ENCODE measurements at regions of chrX and their contacts with region 1.

Region 1: DNA sequence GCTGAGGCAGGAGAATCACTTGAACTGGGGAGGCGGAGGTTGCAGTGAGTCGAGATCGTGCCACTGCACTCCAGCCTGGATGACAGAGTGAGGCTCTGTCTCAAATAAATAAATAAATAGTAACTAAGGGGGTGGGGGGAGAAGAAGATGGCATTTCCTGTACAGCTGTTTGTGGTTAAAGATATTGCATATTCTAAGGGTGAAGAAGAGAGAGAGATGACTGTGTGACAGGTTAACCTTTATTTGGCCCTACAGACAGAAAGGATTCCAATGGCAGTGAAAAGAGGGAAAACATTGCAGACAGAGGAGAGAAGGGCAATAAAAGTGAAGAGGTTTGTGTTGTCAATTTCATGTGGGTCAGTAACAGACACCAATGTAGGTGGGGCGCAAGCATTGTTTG is 9.4 kb downstream of the TASL start:
- DNase-seq: no peak
- H3K4me3 ChIP-seq: no peak overlapping the region
- H3K27ac ChIP-seq: no peak overlapping the region
- H3K4me1 ChIP-seq: no peaks in the 10 kb centered on the region
- H3K27me3 ChIP-seq: no peaks in the 10 kb centered on the region
- CTCF ChIP-seq: no peak

Region 2: GRCh38 chrX:30713061-30713525 is 145.0 kb after region 1 on chrX:
- intact Hi-C with region 1: loop called (anchors 5 kb)
- DNase-seq: peak; percentile 55
- H3K4me3 ChIP-seq: no peak overlapping the region
- H3K27ac ChIP-seq: no peak overlapping the region
- H3K4me1 ChIP-seq: no peaks in the 10 kb centered on the region
- H3K27me3 ChIP-seq: no peaks in the 10 kb centered on the region
- CTCF ChIP-seq: peak; percentile 48

Region 3: GRCh38 chrX:30858098-30858497 is 290.0 kb after region 1 on chrX:
- intact Hi-C with region 1: no loop called
- DNase-seq: no peak
- H3K4me3 ChIP-seq: no peak overlapping the region
- H3K27ac ChIP-seq: no peak overlapping the region
- H3K4me1 ChIP-seq: no peaks in the 10 kb centered on the region
- H3K27me3 ChIP-seq: no peaks in the 10 kb centered on the region
- CTCF ChIP-seq: no peak